ENCODE measurements at regions of chr2 and their contacts with region 1.

Region 1: DNA sequence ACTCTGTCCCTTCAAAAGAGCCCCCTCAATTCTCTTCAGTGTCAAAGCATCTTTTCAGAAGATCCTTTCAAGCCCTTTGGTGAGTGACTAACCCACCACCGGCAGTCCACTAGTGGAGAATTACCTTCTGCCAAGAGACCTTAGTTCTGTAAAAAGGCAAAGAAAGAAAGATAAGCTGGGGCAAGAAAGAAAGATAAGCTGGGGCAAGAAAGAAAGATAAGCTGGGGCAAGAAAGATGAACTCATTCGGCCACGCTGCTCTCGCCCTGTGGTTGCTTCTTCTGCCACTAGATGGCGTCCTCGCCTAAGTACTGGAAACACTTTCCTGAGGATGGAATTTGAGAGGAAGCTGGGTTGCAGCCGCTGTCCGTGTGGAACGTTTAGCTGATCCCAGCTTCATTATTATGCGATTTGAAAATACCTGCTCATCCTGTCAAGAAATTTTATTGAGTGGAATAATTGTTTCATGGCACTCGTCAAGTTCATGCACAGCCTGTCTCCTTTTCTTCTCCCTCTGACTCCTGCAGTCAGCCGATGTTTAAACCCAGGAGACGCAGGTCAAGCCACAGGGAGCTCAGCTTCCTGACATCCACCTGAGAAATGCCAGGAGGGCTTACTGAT is 17.3 kb upstream of the ANXA4 start:
- DNase-seq: peak; percentile 75
- H3K4me3 ChIP-seq: peak overlapping the region; percentile 32 to 39
- H3K27ac ChIP-seq: no peak overlapping the region
- H3K4me1 ChIP-seq: peaks cover 0 to 15% of the 10 kb centered on the region in 2 experiments; a peak in 1 of 4 replicates
- H3K27me3 ChIP-seq: no peaks in the 10 kb centered on the region
- CTCF ChIP-seq: peak; percentile 94
- EP300 ChIP-seq: peak in 1 of 2 experiments; percentile 11; a peak in 1 of 4 replicates
- RAD21 ChIP-seq: peak; percentile 89

Region 2: DNA sequence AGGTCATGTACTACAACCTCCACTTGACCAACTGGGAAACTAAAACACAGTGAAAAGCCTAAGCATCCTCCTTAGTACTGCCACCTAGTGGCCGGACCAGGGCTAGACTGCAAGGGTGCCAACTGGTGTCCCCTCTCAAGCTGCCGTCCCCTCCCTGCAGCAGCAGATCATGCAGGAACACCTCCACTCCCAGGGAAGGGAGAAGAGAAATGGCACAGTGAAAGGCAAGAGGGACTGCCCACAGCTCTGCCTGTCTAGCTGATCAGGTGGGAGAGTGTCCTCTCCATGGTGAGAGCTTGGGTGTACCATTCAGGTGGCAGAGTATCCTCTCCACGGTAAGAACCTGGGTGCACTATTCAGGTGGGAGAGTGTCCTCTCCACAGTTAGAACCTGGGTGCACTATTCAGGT is 159.2 kb before region 1 on chr2:
- CTCF ChIA-PET with region 1: interaction called, 53 read pairs
- POLR2A ChIA-PET with region 1: no interaction called
- DNase-seq: peak; percentile 65
- H3K4me3 ChIP-seq: no peak overlapping the region
- H3K27ac ChIP-seq: no peak overlapping the region
- H3K4me1 ChIP-seq: peaks cover 2 to 32% of the 10 kb centered on the region in 2 experiments
- H3K27me3 ChIP-seq: no peaks in the 10 kb centered on the region
- CTCF ChIP-seq: peak; percentile 80
- EP300 ChIP-seq: no peak
- RAD21 ChIP-seq: peak; percentile 46

Region 3: GRCh38 chr2:69660637-69661036 is 64.0 kb before region 1 on chr2:
- CTCF ChIA-PET with region 1: interaction called, 11 read pairs
- POLR2A ChIA-PET with region 1: no interaction called
- DNase-seq: peak; percentile 10
- H3K4me3 ChIP-seq: no peak overlapping the region
- H3K27ac ChIP-seq: peak overlapping the region; percentile 18 to 30; a peak in 2 of 4 replicates
- H3K4me1 ChIP-seq: no peaks in the 10 kb centered on the region; a peak in 2 of 4 replicates
- H3K27me3 ChIP-seq: no peaks in the 10 kb centered on the region
- CTCF ChIP-seq: no peak
- EP300 ChIP-seq: peak in 1 of 2 experiments; percentile 44; a peak in 1 of 4 replicates
- RAD21 ChIP-seq: no peak

Region 4: GRCh38 chr2:69789175-69789721 is 64.6 kb after region 1 on chr2:
- CTCF ChIA-PET with region 1: interaction called, 11 read pairs
- POLR2A ChIA-PET with region 1: no interaction called
- DNase-seq: no peak
- H3K4me3 ChIP-seq: no peak overlapping the region
- H3K27ac ChIP-seq: peak overlapping the region; percentile 22 to 67; a peak in 3 of 4 replicates
- H3K4me1 ChIP-seq: peaks cover 0 to 10% of the 10 kb centered on the region in 2 experiments; a peak in 3 of 4 replicates
- H3K27me3 ChIP-seq: no peaks in the 10 kb centered on the region
- CTCF ChIP-seq: no peak
- EP300 ChIP-seq: no peak
- RAD21 ChIP-seq: no peak

Region 5: GRCh38 chr2:69804416-69804815 is 79.8 kb after region 1 on chr2:
- CTCF ChIA-PET with region 1: interaction called, 376 read pairs
- POLR2A ChIA-PET with region 1: interaction called, 3 read pairs
- DNase-seq: no peak
- H3K4me3 ChIP-seq: no peak overlapping the region
- H3K27ac ChIP-seq: no peak overlapping the region
- H3K4me1 ChIP-seq: peaks cover 0 to 6% of the 10 kb centered on the region in 2 experiments; a peak in 1 of 4 replicates
- H3K27me3 ChIP-seq: no peaks in the 10 kb centered on the region
- CTCF ChIP-seq: no peak
- EP300 ChIP-seq: no peak
- RAD21 ChIP-seq: no peak

Region 6: GRCh38 chr2:69829256-69830046 is 104.8 kb after region 1 on chr2 and contains the start of gene GMCL1:
- CTCF ChIA-PET with region 1: interaction called, 34 read pairs
- POLR2A ChIA-PET with region 1: no interaction called
- DNase-seq: peak; percentile 94
- H3K4me3 ChIP-seq: peak within 1 kb of the TSS; percentile 82 to 95
- H3K27ac ChIP-seq: peak within 1 kb of the TSS; percentile 87 to 95
- H3K4me1 ChIP-seq: peaks cover 10 to 11% of the 10 kb centered on the region in 2 experiments
- H3K27me3 ChIP-seq: no peaks in the 10 kb centered on the region
- CTCF ChIP-seq: no peak
- EP300 ChIP-seq: no peak
- RAD21 ChIP-seq: no peak
- polyA plus RNA-seq, gene GMCL1: 5.3 and 6.2 TPM in 2 replicates

Region 7: GRCh38 chr2:69914170-69914960 is 189.7 kb after region 1 on chr2:
- CTCF ChIA-PET with region 1: interaction called, 10 read pairs
- POLR2A ChIA-PET with region 1: interaction called, 12 read pairs
- DNase-seq: peak; percentile 93
- H3K4me3 ChIP-seq: peak overlapping the region; percentile 68 to 80
- H3K27ac ChIP-seq: peak overlapping the region; percentile 88 to 93
- H3K4me1 ChIP-seq: peaks cover 2 to 7% of the 10 kb centered on the region in 2 experiments; a peak in 3 of 4 replicates
- H3K27me3 ChIP-seq: no peaks in the 10 kb centered on the region
- CTCF ChIP-seq: no peak; the same call in 1 of the 2 replicates
- EP300 ChIP-seq: no peak
- RAD21 ChIP-seq: peak; percentile 38; the same call in 1 of the 2 replicates